ENCODE measurements at regions of chr13 and their contacts with region 1.

Region 1: GRCh38 chr13:27826379-27827353 is 34.4 kb downstream of the GSX1 start:
- DNase-seq: peak; percentile 81
- ATAC-seq: peak; percentile 98
- H3K4me3 ChIP-seq: peak overlapping the region; percentile 23
- H3K27ac ChIP-seq: no peak overlapping the region
- H3K4me1 ChIP-seq: no peaks in the 10 kb centered on the region
- H3K27me3 ChIP-seq: peaks cover 29% of the 10 kb centered on the region
- CTCF ChIP-seq: peak; percentile 92
- POLR2A ChIP-seq: no peak
- RAD21 ChIP-seq: peak; percentile 95

Region 2: GRCh38 chr13:26985285-26985878 is 841.3 kb before region 1 on chr13:
- CTCF ChIA-PET with region 1: interaction called, 8 read pairs
- POLR2A ChIA-PET with region 1: no interaction called
- dilution Hi-C with region 1: no loop called
- in situ Hi-C with region 1: no loop called
- intact Hi-C with region 1: loop called (anchors 10 kb)
- DNase-seq: peak; percentile 80
- ATAC-seq: peak; percentile 75
- H3K4me3 ChIP-seq: no peak overlapping the region
- H3K27ac ChIP-seq: no peak overlapping the region
- H3K4me1 ChIP-seq: peaks cover 16% of the 10 kb centered on the region
- H3K27me3 ChIP-seq: no peaks in the 10 kb centered on the region
- CTCF ChIP-seq: peak; percentile 92
- POLR2A ChIP-seq: peak; percentile 75
- RAD21 ChIP-seq: peak; percentile 99

Region 3: DNA sequence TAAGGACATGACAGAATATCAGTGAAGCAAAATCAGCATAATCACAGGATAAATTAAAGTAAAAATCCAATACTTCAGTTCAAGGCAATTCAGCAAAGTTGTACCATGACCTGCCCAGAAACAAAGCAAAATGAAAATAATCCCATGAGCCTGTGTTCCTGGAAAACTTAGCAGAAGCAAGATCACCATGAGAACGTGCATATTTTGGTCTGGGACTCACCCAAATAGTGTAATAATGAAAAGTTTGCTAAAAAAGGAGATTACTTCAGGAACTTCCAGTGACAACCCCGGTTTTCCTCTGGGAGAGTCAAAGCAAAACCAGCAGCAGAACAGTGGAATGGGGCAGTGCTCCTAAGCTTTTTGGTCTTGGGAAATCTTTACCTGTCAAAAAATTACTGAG is 590.2 kb before region 1 on chr13:
- CTCF ChIA-PET with region 1: no interaction called
- POLR2A ChIA-PET with region 1: no interaction called
- dilution Hi-C with region 1: no loop called
- in situ Hi-C with region 1: no loop called
- intact Hi-C with region 1: no loop called
- DNase-seq: no peak
- ATAC-seq: no peak
- H3K4me3 ChIP-seq: no peak overlapping the region
- H3K27ac ChIP-seq: no peak overlapping the region
- H3K4me1 ChIP-seq: no peaks in the 10 kb centered on the region
- H3K27me3 ChIP-seq: no peaks in the 10 kb centered on the region
- CTCF ChIP-seq: no peak
- POLR2A ChIP-seq: no peak
- RAD21 ChIP-seq: no peak

Region 4: DNA sequence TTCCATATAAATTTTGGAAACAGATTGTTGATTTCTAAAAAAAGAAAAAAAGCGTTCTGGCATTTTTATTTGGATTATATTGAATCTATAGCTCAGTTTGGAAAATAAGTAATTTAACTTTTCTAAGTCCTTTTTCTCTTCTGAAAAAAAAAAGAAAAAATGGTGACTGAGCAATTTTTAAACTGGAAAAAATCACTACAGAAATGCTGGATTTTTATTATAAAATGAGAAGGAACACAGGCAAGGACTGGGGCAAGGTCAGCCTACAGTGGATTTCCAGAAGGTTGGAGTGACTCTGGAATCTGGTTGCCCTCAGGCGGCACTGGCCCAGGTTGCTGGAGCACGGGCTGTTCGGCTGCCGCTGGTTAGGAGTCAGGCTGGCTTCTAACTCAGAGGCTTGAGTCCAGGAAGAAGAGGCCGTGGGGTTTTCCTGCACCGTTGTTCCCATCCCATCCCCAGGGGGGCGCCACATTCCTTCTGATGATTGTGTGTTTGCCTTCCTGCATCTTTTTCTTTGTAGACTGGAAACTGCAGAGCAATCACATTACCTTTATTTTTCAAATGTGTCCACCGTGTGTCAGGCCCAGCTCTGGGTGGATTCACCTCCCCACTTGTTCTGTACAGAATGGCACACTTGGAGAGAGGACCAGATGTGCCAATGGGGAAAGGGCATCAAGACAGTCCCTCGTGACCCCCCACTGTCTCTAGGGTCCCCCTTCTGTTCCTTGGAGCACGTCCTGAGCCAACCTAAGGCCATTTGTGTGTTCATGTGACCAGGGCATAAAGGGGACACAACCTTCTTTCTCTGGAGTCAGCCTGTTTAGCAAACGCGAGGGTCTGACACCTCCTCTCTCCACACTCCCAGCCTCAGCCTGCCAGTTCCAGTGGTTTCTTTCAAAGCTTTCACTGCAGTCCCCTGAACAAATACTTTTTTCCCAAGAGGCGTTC is 446.7 kb before region 1 on chr13:
- CTCF ChIA-PET with region 1: interaction called, 14 read pairs
- POLR2A ChIA-PET with region 1: no interaction called
- dilution Hi-C with region 1: no loop called
- in situ Hi-C with region 1: loop called (anchors 5 kb)
- intact Hi-C with region 1: no loop called
- DNase-seq: peak; percentile 35
- ATAC-seq: peak; percentile 82
- H3K4me3 ChIP-seq: no peak overlapping the region
- H3K27ac ChIP-seq: no peak overlapping the region
- H3K4me1 ChIP-seq: no peaks in the 10 kb centered on the region
- H3K27me3 ChIP-seq: peaks cover 23% of the 10 kb centered on the region
- CTCF ChIP-seq: peak; percentile 56
- POLR2A ChIP-seq: no peak
- RAD21 ChIP-seq: peak; percentile 62

Region 5: DNA sequence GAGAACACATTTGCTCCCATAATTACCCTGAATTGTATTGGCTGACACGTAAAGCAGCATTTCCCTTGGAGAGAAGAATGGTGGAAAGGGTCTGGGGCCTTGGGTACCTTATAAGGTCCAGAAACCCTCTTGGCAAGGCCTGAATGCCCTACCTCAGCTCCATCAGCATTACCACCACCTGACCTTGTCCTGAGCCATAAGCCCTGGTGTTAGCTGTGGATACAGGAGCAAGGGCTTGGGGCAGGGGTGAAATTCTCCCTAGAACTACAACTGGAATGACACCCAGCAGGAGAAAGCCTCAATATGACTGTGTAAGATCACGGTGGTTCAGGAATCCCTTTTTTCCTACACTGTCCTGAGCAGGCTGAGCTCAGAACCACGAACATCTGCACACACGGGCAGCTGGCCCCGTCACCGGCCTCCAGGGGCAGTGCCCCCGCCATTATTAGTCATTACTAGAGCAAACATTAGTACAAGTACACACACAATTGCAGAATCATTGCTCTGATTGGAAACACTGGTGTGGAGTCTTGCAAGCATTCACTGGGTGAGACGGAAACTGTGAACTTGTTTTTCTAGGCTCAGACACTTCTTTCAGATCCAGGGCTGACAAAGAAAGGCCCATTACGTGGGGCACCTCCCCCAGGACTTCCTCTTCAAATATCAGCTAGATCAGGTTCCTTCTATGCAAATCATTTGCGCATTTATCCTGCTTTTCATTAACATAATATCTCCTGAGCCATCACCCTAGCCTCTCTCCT is 349.5 kb before region 1 on chr13:
- CTCF ChIA-PET with region 1: interaction called, 10 read pairs
- POLR2A ChIA-PET with region 1: no interaction called
- dilution Hi-C with region 1: no loop called
- in situ Hi-C with region 1: no loop called
- intact Hi-C with region 1: no loop called
- DNase-seq: peak; percentile 50
- ATAC-seq: peak; percentile 78
- H3K4me3 ChIP-seq: no peak overlapping the region
- H3K27ac ChIP-seq: no peak overlapping the region
- H3K4me1 ChIP-seq: no peaks in the 10 kb centered on the region
- H3K27me3 ChIP-seq: peaks cover 18% of the 10 kb centered on the region
- CTCF ChIP-seq: no peak
- POLR2A ChIP-seq: no peak
- RAD21 ChIP-seq: no peak

Region 6: DNA sequence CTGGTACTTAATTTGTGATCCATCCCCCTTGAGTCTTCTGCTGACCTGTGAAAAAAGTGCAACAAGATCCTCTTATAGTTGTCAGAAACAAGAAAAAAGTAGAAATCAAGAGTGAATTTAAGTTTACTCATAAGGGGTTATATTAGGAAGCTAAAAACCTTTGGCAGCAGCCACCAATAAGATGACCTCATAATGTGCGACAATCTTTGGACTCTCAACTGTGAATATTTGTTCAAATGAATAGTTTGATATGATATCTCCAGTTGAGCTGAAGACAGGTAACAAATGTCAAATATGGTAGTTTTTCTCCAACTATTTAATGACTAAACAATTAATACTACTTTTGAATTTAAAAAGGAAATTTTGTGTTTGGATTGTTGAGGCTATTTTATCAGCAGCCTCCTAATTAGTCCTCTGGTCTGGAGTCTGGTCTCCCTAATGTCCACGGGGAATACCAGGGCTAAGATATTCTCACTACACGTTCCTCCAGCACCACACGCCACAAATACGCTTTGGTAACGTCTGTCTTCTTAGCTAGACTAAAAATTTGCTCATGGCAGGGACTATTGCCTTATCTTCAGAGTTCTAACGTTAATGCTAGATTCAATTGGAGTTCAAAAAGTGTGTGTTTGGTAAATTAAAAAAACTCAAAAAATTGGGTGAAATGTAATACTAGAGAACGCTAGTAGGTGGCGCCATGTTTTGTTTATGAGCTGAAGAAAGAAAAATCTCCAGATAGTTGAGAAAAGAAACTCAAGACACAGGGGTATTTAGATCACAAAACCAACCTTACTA is 42.2 kb after region 1 on chr13:
- CTCF ChIA-PET with region 1: no interaction called
- POLR2A ChIA-PET with region 1: no interaction called
- dilution Hi-C with region 1: no loop called
- in situ Hi-C with region 1: no loop called
- intact Hi-C with region 1: no loop called
- DNase-seq: peak; percentile 5
- ATAC-seq: no peak
- H3K4me3 ChIP-seq: no peak overlapping the region
- H3K27ac ChIP-seq: no peak overlapping the region
- H3K4me1 ChIP-seq: no peaks in the 10 kb centered on the region
- H3K27me3 ChIP-seq: peaks cover 2% of the 10 kb centered on the region; the same call in 1 of the 2 replicates
- CTCF ChIP-seq: peak; percentile 55
- POLR2A ChIP-seq: no peak
- RAD21 ChIP-seq: peak; percentile 38

Region 7: GRCh38 chr13:27953676-27954405 is 127.2 kb after region 1 on chr13:
- CTCF ChIA-PET with region 1: interaction called, 10 read pairs
- POLR2A ChIA-PET with region 1: no interaction called
- dilution Hi-C with region 1: no loop called
- in situ Hi-C with region 1: no loop called
- intact Hi-C with region 1: no loop called
- DNase-seq: peak; percentile 55
- ATAC-seq: peak; percentile 99
- H3K4me3 ChIP-seq: peak overlapping the region; percentile 45
- H3K27ac ChIP-seq: no peak overlapping the region
- H3K4me1 ChIP-seq: no peaks in the 10 kb centered on the region
- H3K27me3 ChIP-seq: peaks cover 54% of the 10 kb centered on the region
- CTCF ChIP-seq: peak; percentile 81
- POLR2A ChIP-seq: no peak
- RAD21 ChIP-seq: peak; percentile 66

Region 8: DNA sequence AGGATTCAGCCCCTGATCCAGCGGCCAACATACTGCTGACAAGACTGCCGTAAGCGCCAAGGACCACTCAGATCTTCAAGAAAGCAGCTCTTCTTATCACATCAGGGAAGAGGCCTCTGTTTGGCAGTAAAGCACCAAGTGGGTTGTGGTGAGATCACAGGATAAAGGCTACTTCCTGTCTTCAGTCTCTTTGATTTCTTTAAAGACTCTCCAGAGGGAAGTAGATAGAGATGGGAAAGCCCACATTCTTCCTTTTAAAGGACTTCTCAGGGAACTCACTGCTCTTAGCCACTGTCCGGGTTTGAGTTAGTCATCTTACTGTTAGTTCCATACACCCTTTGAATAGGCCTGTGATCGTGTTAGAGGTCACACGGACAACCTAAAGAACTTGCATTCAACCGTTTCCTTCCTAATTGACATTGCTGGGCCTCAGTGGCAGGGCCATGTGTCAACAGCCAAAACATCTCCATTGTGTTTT is 785.0 kb after region 1 on chr13:
- CTCF ChIA-PET with region 1: no interaction called
- POLR2A ChIA-PET with region 1: no interaction called
- dilution Hi-C with region 1: no loop called
- in situ Hi-C with region 1: no loop called
- intact Hi-C with region 1: no loop called
- DNase-seq: peak; percentile 44
- ATAC-seq: no peak
- H3K4me3 ChIP-seq: no peak overlapping the region
- H3K27ac ChIP-seq: no peak overlapping the region
- H3K4me1 ChIP-seq: peaks cover 2% of the 10 kb centered on the region; the same call in 1 of the 2 replicates
- H3K27me3 ChIP-seq: no peaks in the 10 kb centered on the region
- CTCF ChIP-seq: no peak
- POLR2A ChIP-seq: no peak
- RAD21 ChIP-seq: no peak

Region 9: DNA sequence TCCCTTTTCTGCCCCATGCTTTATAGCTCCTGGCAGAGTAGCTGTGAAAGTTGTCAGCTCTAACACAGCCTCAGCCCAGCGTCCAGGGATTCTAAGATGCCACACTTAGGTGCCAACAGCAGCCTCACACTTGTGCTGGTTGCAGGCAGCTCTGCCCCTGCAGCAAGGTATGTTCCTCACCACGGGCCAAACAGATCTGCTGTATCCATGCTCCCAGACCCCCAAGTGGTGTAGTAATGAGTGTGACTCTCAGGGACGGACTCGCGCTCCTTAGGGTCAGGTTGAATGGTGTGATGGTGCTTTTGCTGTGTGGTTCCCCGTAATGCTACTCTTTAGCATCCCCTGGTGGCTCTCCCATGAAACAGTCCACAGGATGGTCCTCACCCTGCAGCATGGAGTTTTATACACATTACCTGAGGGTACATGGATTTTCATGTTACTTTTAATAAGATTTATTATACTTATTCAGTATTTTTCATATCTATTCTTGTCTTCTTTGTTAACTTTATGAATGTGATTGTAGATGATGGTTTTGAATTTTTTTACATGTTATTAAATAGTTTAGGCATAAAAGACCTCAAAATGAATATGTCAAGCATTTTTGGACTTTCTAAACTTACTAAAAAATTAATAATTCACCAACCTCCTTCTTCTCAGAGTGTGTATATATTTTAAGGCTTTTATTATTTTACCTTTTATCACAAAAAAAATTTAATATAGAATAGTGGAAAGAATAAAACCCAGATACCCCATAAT is 1536.4 kb after region 1 on chr13:
- CTCF ChIA-PET with region 1: no interaction called
- POLR2A ChIA-PET with region 1: no interaction called
- dilution Hi-C with region 1: no loop called
- in situ Hi-C with region 1: no loop called
- intact Hi-C with region 1: loop called (anchors 10 kb)
- DNase-seq: peak; percentile 44
- ATAC-seq: peak; percentile 99
- H3K4me3 ChIP-seq: no peak overlapping the region
- H3K27ac ChIP-seq: no peak overlapping the region
- H3K4me1 ChIP-seq: no peaks in the 10 kb centered on the region
- H3K27me3 ChIP-seq: peaks cover under 1% of the 10 kb centered on the region; the same call in 1 of the 2 replicates
- CTCF ChIP-seq: peak; percentile 73
- POLR2A ChIP-seq: no peak
- RAD21 ChIP-seq: peak; percentile 58

Measured in IMR-90 (cell line).